Left cardiac atrium (tissue), 4 donors: ENCODE measurements at regions of chr21 and their contacts with region 1.

Region 1: DNA sequence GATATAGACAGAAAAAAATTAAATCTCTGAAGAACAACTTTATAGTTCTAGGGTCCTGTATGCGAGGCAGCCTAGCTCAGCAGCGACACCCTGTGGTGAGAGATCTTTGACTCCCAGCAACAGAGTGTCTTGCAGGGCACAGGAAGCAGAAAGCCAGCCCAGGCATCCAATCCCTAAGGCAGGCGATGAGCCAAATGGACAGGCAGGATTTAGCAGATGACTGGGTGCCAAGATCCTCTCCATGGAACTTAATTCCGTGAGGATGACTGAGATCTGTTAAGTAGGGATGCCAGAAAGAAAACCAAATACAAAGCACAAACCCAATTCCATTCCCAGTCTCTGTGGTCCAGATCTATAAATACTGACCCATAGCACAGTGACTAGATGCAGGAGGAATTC is 38.8 kb downstream of the HLCS start:
- DNase-seq: peak; percentile 87
- ATAC-seq: peak; percentile 87 to 88

Region 2: GRCh38 chr21:36419996-36420395 is 507.7 kb before region 1 on chr21:
- intact Hi-C with region 1: loop called in 1 of 2 experiments (anchors 2 kb)
- DNase-seq: peak; percentile 90
- ATAC-seq: peak; percentile 83 to 90

Region 3: GRCh38 chr21:36504067-36505058 is 423.4 kb before region 1 on chr21:
- intact Hi-C with region 1: loop called (anchors 2 to 10 kb)
- DNase-seq: no peak
- ATAC-seq: peak in 1 of 2 donors; percentile 76

Region 4: GRCh38 chr21:36630485-36631206 is 297.1 kb before region 1 on chr21:
- intact Hi-C with region 1: loop called in 1 of 2 experiments (anchors 2 kb)
- DNase-seq: peak; percentile 59
- ATAC-seq: peak; percentile 44 to 60